Psoas muscle (tissue), 8 donors: ENCODE measurements at regions of chr16 and their contacts with region 1.

Region 1: GRCh38 chr16:4214215-4214621 is 27.7 kb downstream of the SRL start:
- DNase-seq: peak; percentile 62 to 74
- ATAC-seq: peak; percentile 59 to 65 (median 62)
- H3K4me3 ChIP-seq: no peak overlapping the region
- H3K27ac ChIP-seq: peak overlapping the region; percentile 98
- H3K4me1 ChIP-seq: peaks cover 84% of the 10 kb centered on the region
- H3K27me3 ChIP-seq: no peaks in the 10 kb centered on the region
- CTCF ChIP-seq: no peak

Region 2: DNA sequence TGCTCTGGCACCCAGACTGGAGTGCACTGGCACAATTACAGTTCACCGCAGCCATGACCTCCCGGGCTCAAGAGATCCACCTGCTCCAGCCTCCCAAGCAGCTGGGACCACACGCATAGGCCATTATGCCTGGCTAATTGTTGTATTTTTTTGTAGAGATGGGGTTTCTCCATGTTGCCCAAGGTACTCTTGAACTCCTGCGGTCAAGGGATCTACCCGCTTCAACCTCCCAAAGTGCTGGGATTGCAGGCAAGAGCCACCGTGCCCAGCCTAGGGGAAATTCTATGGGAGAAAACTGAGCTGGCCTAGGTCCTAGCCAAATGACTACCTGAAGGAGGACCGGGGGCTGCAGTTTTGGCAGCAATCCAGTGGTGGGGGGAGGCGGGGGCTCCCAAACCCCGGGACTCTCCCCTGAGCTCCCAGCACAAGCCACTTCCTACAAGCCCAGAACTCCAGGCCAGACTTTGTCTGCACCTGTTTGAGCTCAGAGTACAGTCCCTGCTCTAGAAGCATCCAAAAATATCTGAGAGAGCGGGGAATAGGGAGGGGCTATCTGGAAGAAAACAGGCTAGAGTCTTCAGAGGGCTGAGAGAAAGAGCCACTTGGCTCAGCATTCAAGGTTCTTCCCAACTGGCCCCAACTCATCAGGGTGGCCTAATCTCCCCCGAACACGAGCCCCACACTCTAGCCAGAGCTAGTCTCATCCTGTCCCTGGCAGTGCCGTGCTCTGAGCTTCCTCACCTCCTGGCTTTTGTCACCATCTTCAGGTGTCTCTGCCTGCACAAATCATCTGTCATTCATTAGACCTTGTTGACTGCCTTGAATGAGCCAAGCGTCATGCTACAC is 18.5 kb after region 1 on chr16:
- intact Hi-C with region 1: loop called (anchors 2 kb)
- DNase-seq: peak; percentile 43 to 85
- ATAC-seq: peak; percentile 67 to 84 (median 78)
- H3K4me3 ChIP-seq: peak overlapping the region; percentile 43
- H3K27ac ChIP-seq: peak overlapping the region; percentile 94
- H3K4me1 ChIP-seq: peaks cover 64% of the 10 kb centered on the region
- H3K27me3 ChIP-seq: no peaks in the 10 kb centered on the region
- CTCF ChIP-seq: no peak

Region 3: GRCh38 chr16:4682616-4683254 is 468.5 kb after region 1 on chr16:
- intact Hi-C with region 1: no loop called
- DNase-seq: peak in 1 of 2 donors; percentile 78
- ATAC-seq: peak in 3 of 4 donors; percentile 17 to 46 (median 42)
- H3K4me3 ChIP-seq: no peak overlapping the region
- H3K27ac ChIP-seq: peak overlapping the region; percentile 36
- H3K4me1 ChIP-seq: peaks cover 22% of the 10 kb centered on the region
- H3K27me3 ChIP-seq: no peaks in the 10 kb centered on the region
- CTCF ChIP-seq: peak; percentile 30